ENCODE measurements at regions of chr21 and their contacts with region 1.

Region 1: GRCh38 chr21:41933313-41934086 is 20.3 kb downstream of the C2CD2 start:
- DNase-seq: peak in 2 of 3 donors; percentile 75 to 84
- H3K4me3 ChIP-seq: peak overlapping the region in 5 of 7 experiments; percentile 2 to 54 (median 46)
- H3K27ac ChIP-seq: peak overlapping the region; percentile 29 to 72
- H3K4me1 ChIP-seq: peaks cover 19 to 59% (median 52%) of the 10 kb centered on the region in 4 experiments
- H3K27me3 ChIP-seq: no peaks in the 10 kb centered on the region

Region 2: DNA sequence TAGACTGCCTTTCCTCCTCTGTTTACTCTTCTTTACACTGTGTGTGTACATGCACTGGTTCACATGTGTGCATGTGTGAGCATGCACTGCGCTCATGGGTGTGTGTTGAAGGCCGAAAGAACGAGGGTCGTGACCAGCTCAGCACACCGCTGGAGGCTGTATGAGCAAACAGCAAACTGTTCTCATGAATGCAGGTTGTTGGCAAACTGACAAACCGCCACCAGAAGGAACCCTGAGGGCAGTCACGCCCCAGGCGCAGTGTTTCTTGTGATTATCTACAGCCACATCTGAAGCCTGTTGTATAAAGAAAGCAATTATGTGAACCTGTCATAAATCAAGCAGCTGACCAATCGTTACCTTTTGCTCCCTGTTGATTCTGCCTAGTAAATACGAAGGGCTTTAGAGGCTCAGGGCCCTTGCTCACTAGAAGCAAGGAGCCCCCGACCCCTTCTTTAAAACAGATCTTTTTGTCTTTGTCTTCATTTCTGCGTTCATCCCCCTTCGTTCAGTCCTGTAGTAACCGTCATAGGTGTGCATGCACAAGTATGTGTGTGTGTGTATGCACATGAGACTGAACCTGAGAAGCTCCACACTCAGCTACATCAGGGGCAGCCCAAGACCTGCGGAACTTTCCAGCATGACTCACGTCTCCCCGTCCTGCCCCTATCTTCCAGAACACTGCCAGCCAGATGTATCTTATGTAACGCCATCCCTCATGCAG is 149.9 kb before region 1 on chr21:
- CTCF ChIA-PET with region 1: no interaction called
- POLR2A ChIA-PET with region 1: no interaction called
- DNase-seq: peak; percentile 81 to 98 (median 97)
- H3K4me3 ChIP-seq: peak overlapping the region in 3 of 7 experiments; percentile 14 to 34 (median 26)
- H3K27ac ChIP-seq: no peak overlapping the region
- H3K4me1 ChIP-seq: peaks cover 0 to 39% (median 18%) of the 10 kb centered on the region in 4 experiments
- H3K27me3 ChIP-seq: peaks cover 0 to 18% (median 3%) of the 10 kb centered on the region in 5 experiments

Region 3: GRCh38 chr21:41816220-41817165 is 117.0 kb before region 1 on chr21:
- CTCF ChIA-PET with region 1: interaction called, 13 read pairs
- POLR2A ChIA-PET with region 1: no interaction called
- DNase-seq: peak; percentile 59 to 67 (median 66)
- H3K4me3 ChIP-seq: peak overlapping the region in 1 of 7 experiments; percentile 4
- H3K27ac ChIP-seq: no peak overlapping the region
- H3K4me1 ChIP-seq: peaks cover 0 to 5% (median 4%) of the 10 kb centered on the region in 4 experiments
- H3K27me3 ChIP-seq: no peaks in the 10 kb centered on the region

Region 4: GRCh38 chr21:41885341-41886029 is 48.0 kb before region 1 on chr21:
- CTCF ChIA-PET with region 1: interaction called, 11 read pairs
- POLR2A ChIA-PET with region 1: no interaction called
- DNase-seq: peak; percentile 36 to 86 (median 75)
- H3K4me3 ChIP-seq: no peak overlapping the region
- H3K27ac ChIP-seq: peak overlapping the region; percentile 18 to 33
- H3K4me1 ChIP-seq: peaks cover 8 to 32% (median 22%) of the 10 kb centered on the region in 4 experiments
- H3K27me3 ChIP-seq: no peaks in the 10 kb centered on the region

Region 5: GRCh38 chr21:41948078-41948895 is 14.8 kb after region 1 on chr21:
- CTCF ChIA-PET with region 1: interaction called, 16 read pairs
- POLR2A ChIA-PET with region 1: no interaction called
- DNase-seq: peak in 1 of 3 donors; percentile 36
- H3K4me3 ChIP-seq: no peak overlapping the region
- H3K27ac ChIP-seq: no peak overlapping the region
- H3K4me1 ChIP-seq: peaks cover 0 to 57% (median 37%) of the 10 kb centered on the region in 4 experiments
- H3K27me3 ChIP-seq: no peaks in the 10 kb centered on the region

Region 6: GRCh38 chr21:42093991-42094421 is 160.5 kb after region 1 on chr21:
- CTCF ChIA-PET with region 1: no interaction called
- POLR2A ChIA-PET with region 1: no interaction called
- DNase-seq: no peak
- H3K4me3 ChIP-seq: no peak overlapping the region
- H3K27ac ChIP-seq: no peak overlapping the region
- H3K4me1 ChIP-seq: peaks cover 0 to 28% (median 14%) of the 10 kb centered on the region in 4 experiments
- H3K27me3 ChIP-seq: no peaks in the 10 kb centered on the region

Region 7: DNA sequence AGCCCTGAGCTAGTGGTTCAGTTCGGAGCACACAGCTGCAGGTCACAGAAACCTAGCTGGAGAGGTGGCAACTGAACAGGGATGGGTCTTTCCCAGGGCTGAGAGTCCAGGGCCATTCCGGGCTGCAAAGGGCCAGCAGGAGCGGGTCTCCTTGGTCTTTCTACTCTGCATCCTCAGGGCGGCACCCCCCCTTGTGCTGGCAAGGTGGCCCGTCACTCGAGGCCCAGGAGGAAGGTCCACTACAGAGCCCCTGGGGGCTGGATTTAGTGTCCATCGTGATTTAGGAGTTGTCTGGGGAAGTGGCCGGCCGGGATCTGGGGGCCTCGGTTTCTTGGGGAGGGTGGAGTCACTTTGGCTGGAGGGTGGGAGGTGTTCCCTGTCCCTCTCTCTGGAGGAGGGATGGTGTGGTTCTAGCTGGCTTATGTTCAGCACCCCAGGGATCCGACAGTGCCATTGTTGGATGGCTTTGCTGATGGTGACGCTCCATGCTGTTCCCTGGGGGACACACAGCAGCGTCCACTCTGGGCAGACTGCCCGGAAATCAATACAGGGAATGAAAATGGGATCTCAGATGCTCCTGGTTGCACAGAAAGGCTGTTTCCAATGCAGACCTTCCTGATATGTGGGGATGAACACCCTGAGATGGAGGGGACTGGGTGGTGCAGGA is 202.0 kb after region 1 on chr21:
- CTCF ChIA-PET with region 1: no interaction called
- POLR2A ChIA-PET with region 1: no interaction called
- DNase-seq: no peak
- H3K4me3 ChIP-seq: no peak overlapping the region
- H3K27ac ChIP-seq: no peak overlapping the region
- H3K4me1 ChIP-seq: peaks cover 0 to 8% (median 3%) of the 10 kb centered on the region in 4 experiments
- H3K27me3 ChIP-seq: no peaks in the 10 kb centered on the region

Measured in common myeloid progenitor, CD34-positive (primary cell).